ENCODE measurements at regions of chr3 and their contacts with region 1.

Region 1: DNA sequence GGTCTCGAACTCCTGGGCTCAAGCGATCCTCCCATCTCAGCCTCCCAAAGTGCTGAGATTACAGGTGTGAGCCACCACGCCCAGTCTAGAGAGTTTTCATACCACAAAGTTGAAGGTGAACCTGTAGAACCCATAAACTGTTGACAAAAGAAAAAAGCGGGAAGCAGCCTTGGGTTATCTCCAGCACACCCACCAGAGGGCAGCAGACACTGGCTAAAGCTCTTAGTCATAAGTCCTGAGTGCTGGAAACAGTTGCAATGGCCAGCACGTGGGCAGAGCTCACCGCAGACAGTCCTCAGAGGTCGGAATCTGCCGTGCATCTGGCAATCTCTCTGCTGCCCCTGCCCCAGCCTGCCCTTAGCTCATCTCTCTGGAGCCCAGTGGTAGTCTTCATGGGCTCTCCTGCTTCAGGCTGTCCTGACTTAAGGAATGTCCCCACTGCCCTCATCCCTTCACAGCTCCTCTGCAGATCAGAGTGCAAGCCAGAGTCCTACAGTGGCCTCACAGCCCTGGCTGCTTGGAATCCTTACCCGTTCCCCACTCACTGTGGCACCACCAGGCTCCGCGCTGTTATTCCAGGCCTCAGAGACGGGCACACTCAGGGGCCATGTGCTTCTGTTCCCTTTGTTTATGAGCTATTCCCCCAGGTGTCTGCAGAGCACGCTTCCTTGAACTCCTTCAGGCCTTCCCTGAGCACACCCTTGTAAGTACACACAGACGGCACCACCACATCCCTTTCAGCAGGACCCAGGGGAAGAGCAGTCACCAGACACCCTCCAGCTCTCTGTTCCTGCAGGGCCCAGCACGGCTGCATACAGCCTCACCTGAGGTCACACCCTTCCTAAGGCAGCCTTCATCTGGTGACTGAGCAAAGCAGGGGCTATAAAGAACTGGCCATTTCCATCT is 8.8 kb upstream of the ELP6 start:
- DNase-seq: peak; percentile 73
- ATAC-seq: peak; percentile 97 to 98

Region 2: GRCh38 chr3:47612178-47612577 is 89.8 kb after region 1 on chr3:
- intact Hi-C with region 1: no loop called
- DNase-seq: no peak
- ATAC-seq: peak; percentile 96 to 97

Region 3: GRCh38 chr3:47791193-47791855 is 269.0 kb after region 1 on chr3:
- intact Hi-C with region 1: loop called (anchors 1 to 5 kb)
- DNase-seq: no peak
- ATAC-seq: no peak